CD4-positive, alpha-beta memory T cell (primary cell): ENCODE measurements at regions of chr13 and their contacts with region 1.

Region 1: DNA sequence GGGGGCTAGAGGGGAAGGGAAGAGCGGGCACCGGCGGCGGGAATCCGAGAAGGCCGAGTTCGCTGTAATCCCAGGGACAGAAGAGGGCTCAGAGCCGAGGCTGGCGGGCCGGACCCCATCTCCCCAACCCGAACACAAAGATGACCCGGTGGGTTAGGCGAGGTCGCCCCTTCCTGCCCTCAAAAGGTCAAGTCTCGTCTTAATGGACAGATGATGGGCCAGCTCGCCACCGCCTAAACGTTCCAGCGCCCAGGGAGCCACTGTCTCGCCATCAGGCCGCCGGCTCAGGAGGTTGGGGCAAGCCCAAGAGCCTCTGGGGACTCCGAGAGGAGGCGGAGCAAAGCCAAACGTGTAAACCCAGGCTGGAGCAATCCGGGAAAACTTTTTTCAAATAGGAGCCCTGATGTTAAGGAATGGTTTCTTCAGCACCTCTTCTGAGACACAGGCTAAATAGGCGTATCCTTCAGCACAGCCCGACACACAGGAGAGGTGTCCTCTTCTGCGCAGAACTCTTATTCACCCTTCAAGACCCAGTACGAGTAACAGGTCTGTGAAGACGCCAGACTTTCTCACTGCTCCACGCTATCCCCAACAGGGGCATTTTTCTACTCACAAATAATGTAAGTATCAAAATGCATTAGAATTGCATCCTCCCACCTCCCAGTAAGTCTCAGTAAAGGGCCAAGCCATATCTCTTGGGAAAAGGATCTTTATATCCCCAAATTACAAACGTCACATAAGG is 6.3 kb upstream of the POU4F1 start:
- DNase-seq: no peak
- H3K4me3 ChIP-seq: peak overlapping the region in 1 of 2 donors; percentile 29
- H3K4me3 Mint-ChIP-seq: peak overlapping the region; percentile 73 to 87 (median 82)
- H3K27ac ChIP-seq: no peak overlapping the region
- H3K27ac Mint-ChIP-seq: peak overlapping the region in 2 of 7 donors; percentile 8 to 73
- H3K4me1 ChIP-seq: peaks cover 32% of the 10 kb centered on the region
- H3K4me1 Mint-ChIP-seq: peaks cover 15 to 47% (median 29%) of the 10 kb centered on the region in 4 donors
- H3K27me3 ChIP-seq: peaks cover 52% of the 10 kb centered on the region
- H3K27me3 Mint-ChIP-seq: peaks cover 48 to 53% of the 10 kb centered on the region in 2 donors

Region 2: DNA sequence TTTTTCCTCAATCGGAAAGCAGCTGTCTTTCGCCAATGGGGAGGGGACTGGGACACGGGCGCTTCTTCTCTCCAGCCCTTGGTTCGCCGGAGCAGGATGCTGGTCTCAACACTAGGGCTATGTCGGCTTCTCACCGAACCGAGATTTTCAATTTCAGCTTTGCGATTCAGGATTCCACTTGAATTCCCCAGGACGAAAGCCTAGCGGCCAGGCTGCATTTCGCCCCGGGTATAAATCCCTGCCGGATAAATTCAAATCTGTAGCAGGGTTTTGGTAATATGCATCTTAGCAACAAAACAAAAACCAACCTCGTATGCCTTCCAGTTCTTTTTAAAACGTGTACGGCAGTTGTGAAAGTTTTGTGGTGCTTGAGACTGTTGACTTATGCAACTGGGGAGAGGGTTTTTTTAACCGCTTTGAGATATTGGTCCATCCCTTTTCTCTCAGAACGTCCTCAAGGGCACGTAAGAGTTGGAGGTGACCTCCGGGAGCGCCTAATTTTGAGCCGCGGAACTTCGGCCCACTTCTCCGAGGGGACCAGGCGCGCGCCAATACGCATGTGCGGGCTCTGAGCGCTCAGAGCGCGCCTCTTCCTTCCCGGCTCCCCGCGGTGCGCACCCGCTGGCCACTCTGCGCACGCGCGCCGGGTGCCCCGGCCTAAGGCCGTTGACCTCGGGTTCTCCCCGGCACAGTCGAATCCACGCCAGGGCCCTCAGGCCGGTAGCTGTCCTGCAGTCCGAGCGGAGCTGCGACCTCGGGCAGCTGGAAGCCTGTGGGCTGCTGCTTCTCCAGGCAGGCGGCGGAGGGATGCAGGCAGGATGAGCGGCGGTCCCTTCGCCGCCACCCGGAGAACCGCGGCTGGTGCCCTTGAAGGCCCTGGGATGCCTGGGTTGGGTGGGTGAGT is 13.9 kb before region 1 on chr13:
- CTCF ChIA-PET with region 1: interaction called, 3 read pairs
- POLR2A ChIA-PET with region 1: interaction called, 4 read pairs
- intact Hi-C with region 1: loop called (anchors 2 kb)
- DNase-seq: no peak
- H3K4me3 ChIP-seq: no peak overlapping the region
- H3K4me3 Mint-ChIP-seq: peak overlapping the region in 4 of 8 donors; percentile 7 to 32 (median 26)
- H3K27ac ChIP-seq: no peak overlapping the region
- H3K27ac Mint-ChIP-seq: peak overlapping the region in 4 of 7 donors; percentile 25 to 89 (median 77)
- H3K4me1 ChIP-seq: no peaks in the 10 kb centered on the region
- H3K4me1 Mint-ChIP-seq: peaks cover under 1 to 21% (median 1%) of the 10 kb centered on the region in 4 donors
- H3K27me3 ChIP-seq: peaks cover 89% of the 10 kb centered on the region
- H3K27me3 Mint-ChIP-seq: peaks cover 67 to 74% of the 10 kb centered on the region in 2 donors